CD14-positive monocyte (primary cell): ENCODE measurements at regions of chr1 and their contacts with region 1.

Region 1: GRCh38 chr1:24150234-24151174 is 7.6 kb upstream of the IL22RA1 start:
- DNase-seq: peak; percentile 66 to 77 (median 70)
- H3K4me3 ChIP-seq: no peak overlapping the region
- H3K4me3 Mint-ChIP-seq: peak overlapping the region; percentile 25 to 88
- H3K27ac ChIP-seq: no peak overlapping the region
- H3K27ac Mint-ChIP-seq: peak overlapping the region in 4 of 7 donors; percentile 37 to 84 (median 59)
- H3K4me1 ChIP-seq: peaks cover 10% of the 10 kb centered on the region in 2 donors
- H3K4me1 Mint-ChIP-seq: peaks cover 14% of the 10 kb centered on the region
- H3K27me3 ChIP-seq: peaks cover 13 to 33% of the 10 kb centered on the region in 2 donors
- H3K27me3 Mint-ChIP-seq: peaks cover 43 to 55% (median 43%) of the 10 kb centered on the region in 3 donors
- CTCF ChIP-seq: peak; percentile 96

Region 2: GRCh38 chr1:24186993-24187805 is 36.7 kb after region 1 on chr1 and contains the start of gene IFNLR1:
- intact Hi-C with region 1: loop called in 1 of 2 experiments (anchors 5 kb)
- DNase-seq: peak in 2 of 3 donors; percentile 27 to 35
- H3K4me3 ChIP-seq: peak within 1 kb of the TSS in 2 of 3 experiments; percentile 22 to 65
- H3K4me3 Mint-ChIP-seq: peak within 1 kb of the TSS; percentile 75 to 90
- H3K27ac ChIP-seq: no peak within 1 kb of the TSS
- H3K27ac Mint-ChIP-seq: peak within 1 kb of the TSS in 3 of 7 donors; percentile 11 to 30 (median 19)
- H3K4me1 ChIP-seq: peaks cover 44 to 53% of the 10 kb centered on the region in 2 donors
- H3K4me1 Mint-ChIP-seq: peaks cover 53% of the 10 kb centered on the region
- H3K27me3 ChIP-seq: peaks cover 17 to 36% of the 10 kb centered on the region in 2 donors
- H3K27me3 Mint-ChIP-seq: peaks cover 32 to 51% (median 49%) of the 10 kb centered on the region in 3 donors
- CTCF ChIP-seq: no peak
- polyA plus RNA-seq, gene IFNLR1: not detected

Region 3: GRCh38 chr1:24201941-24202440 is 51.5 kb after region 1 on chr1:
- intact Hi-C with region 1: loop called in 1 of 2 experiments (anchors 5 kb)
- DNase-seq: peak; percentile 32 to 65 (median 53)
- H3K4me3 ChIP-seq: no peak overlapping the region
- H3K4me3 Mint-ChIP-seq: no peak overlapping the region
- H3K27ac ChIP-seq: no peak overlapping the region
- H3K27ac Mint-ChIP-seq: no peak overlapping the region
- H3K4me1 ChIP-seq: peaks cover 18 to 19% of the 10 kb centered on the region in 2 donors
- H3K4me1 Mint-ChIP-seq: peaks cover 17% of the 10 kb centered on the region
- H3K27me3 ChIP-seq: no peaks in the 10 kb centered on the region
- H3K27me3 Mint-ChIP-seq: peaks cover 4 to 6% (median 6%) of the 10 kb centered on the region in 3 donors
- CTCF ChIP-seq: peak; percentile 85